ENCODE measurements at regions of chr14 and their contacts with region 1.

Region 1: DNA sequence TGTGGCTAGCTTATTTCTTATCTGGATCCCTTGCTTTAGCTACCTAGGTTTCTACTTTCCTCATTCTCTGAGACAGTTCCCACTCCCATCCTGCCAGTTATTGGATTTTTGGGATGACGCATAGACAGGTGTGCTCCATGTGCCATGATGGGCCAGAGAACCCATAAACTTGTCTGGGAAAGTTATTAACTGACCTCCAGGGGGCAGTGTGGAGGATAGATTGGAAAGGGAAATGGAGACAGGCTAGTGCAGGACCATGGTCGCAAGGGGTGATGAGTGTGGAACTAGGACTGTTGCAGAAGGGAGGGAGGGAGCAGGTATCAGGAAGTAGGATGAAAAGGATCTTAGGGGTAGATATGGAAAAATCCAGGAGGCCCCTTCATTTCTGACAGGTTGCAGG is 80.3 kb downstream of the ESRRB start:
- H3K4me3 ChIP-seq: no peak overlapping the region
- H3K27ac ChIP-seq: no peak overlapping the region
- H3K4me1 ChIP-seq: no peaks in the 10 kb centered on the region
- CTCF ChIP-seq: 0 out of 2 replicates have a peak, but pooled peaks have one; percentile 13

Region 2: DNA sequence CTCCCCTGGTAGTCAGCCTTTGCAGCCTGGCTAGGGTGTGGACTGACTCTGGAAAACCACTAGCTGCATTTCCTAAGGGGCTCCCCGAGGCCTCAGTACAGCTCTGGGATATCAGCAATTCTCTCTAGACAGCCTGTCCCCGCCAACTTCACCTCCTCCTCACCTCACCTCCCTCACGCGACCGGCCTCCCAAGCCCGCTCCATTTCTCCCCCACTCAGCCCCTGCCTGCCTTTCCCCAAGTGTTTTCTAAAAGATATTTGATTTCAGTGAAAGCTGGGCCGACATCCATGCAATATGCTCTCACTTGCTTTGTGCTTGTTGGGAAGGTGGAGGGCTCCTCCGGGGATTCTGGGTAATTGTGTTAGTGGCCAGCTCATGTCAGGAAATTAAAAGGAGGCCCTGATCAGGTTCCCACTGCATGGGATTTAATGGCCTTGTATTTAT is 11.5 kb after region 1 on chr14:
- CTCF ChIA-PET with region 1: interaction called, 17 read pairs
- POLR2A ChIA-PET with region 1: no interaction called
- H3K4me3 ChIP-seq: no peak overlapping the region
- H3K27ac ChIP-seq: no peak overlapping the region
- H3K4me1 ChIP-seq: no peaks in the 10 kb centered on the region
- CTCF ChIP-seq: no peak

Region 3: DNA sequence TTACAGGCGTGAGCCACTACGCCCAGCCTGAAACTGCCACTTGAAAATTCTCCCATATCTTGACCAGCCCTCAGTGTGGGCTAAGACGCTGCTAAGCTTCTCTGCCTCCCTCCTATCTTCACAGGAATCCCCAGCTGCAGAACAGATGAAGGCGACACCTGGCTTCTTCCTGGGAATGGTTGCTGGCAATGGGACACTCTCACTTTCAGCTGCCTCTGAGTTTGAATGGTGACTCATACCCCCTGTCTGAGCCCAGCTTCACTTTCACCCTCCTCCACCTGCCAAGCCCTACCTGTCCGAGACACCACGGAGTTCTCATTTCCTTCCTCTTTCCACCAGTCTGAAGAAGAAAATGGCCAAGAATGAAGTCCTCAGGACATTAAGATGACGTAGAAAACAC is 286.8 kb after region 1 on chr14:
- CTCF ChIA-PET with region 1: no interaction called
- POLR2A ChIA-PET with region 1: no interaction called
- H3K4me3 ChIP-seq: no peak overlapping the region
- H3K27ac ChIP-seq: no peak overlapping the region
- H3K4me1 ChIP-seq: no peaks in the 10 kb centered on the region
- CTCF ChIP-seq: no peak

Measured in HEK293 (cell line).